CD4-positive, alpha-beta memory T cell (primary cell): ENCODE measurements at regions of chr14 and their contacts with region 1.

Region 1: DNA sequence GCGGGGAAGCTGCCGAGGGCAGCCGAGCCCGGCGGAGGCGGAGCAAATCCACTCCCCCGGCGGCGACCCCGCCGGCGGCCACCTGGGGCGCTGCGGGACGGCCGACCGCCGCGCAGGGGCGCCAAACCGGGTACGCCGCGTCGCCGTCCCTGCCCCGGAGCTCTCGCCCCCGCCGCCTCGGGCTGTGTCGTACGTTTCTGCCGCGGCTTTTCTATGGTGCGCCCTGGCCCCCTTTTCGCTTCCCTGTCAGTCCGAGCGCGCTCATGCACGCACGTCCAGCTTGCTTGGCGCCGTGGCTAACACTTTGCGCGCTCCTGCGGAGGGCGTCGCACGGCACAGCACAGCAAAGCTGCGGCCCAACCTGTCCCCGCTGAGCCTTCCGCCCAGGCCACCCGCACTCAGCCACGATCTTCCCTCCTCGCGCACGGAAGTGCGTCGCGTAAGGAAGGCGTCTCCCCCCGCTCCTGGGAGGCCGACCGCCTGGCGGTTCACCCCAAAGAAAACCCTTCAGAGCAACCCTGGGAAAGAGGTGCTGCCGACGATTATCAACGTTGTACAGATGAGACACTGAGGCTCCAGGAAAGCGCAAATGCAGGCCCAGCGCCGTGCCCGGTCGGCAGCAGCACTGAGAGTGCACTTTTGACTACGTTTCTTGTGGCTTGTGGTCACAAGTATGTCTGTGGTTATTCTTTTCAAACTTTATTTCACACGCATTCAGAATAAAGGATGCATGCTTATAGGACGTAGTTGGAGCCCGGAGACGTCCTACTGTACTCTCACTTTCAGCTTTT is at the start of gene HECTD1:
- DNase-seq: peak; percentile 91 to 94 (median 92)
- H3K4me3 ChIP-seq: peak within 1 kb of the TSS; percentile 76 to 79
- H3K4me3 Mint-ChIP-seq: peak within 1 kb of the TSS; percentile 91 to 98 (median 95)
- H3K27ac ChIP-seq: peak within 1 kb of the TSS; percentile 97
- H3K27ac Mint-ChIP-seq: peak within 1 kb of the TSS; percentile 99 to 100 (median 99)
- H3K4me1 ChIP-seq: peaks cover 46% of the 10 kb centered on the region
- H3K4me1 Mint-ChIP-seq: peaks cover 43 to 77% (median 55%) of the 10 kb centered on the region in 4 donors
- H3K27me3 ChIP-seq: no peaks in the 10 kb centered on the region
- H3K27me3 Mint-ChIP-seq: no peaks in the 10 kb centered on the region
- total RNA-seq, gene HECTD1: 157 to 170 TPM

Region 2: DNA sequence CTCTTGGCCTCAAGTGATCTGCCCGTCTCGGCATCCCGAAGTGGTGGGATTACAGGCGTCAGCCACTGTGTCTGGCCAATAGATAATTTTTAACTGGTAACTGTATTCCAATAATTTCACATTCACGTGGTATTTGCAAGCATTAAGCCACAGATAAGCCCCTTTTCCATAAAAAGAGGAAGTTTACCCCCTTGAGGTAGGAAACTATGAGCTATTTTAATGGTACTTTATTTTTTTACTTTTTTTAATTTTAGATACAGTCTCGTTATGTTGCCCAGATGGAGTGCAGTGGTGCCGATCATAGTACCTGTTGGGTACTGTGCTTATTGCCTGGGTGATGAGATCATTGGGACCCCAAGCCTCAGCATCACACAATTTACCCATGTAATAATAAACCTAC is 225.4 kb before region 1 on chr14:
- CTCF ChIA-PET with region 1: interaction called, 3 read pairs
- POLR2A ChIA-PET with region 1: interaction called, 4 read pairs
- intact Hi-C with region 1: loop called (anchors 5 kb)
- DNase-seq: no peak
- H3K4me3 ChIP-seq: no peak overlapping the region
- H3K4me3 Mint-ChIP-seq: no peak overlapping the region
- H3K27ac ChIP-seq: no peak overlapping the region
- H3K27ac Mint-ChIP-seq: peak overlapping the region in 1 of 7 donors; percentile 11
- H3K4me1 ChIP-seq: no peaks in the 10 kb centered on the region
- H3K4me1 Mint-ChIP-seq: peaks cover 15 to 28% (median 19%) of the 10 kb centered on the region in 4 donors
- H3K27me3 ChIP-seq: no peaks in the 10 kb centered on the region
- H3K27me3 Mint-ChIP-seq: no peaks in the 10 kb centered on the region

Region 3: GRCh38 chr14:31127690-31128089 is 80.3 kb before region 1 on chr14:
- CTCF ChIA-PET with region 1: interaction called, 28 read pairs
- POLR2A ChIA-PET with region 1: interaction called, 152 read pairs
- intact Hi-C with region 1: loop called (anchors 1 kb)
- DNase-seq: peak; percentile 80 to 91 (median 85)
- H3K4me3 ChIP-seq: no peak overlapping the region
- H3K4me3 Mint-ChIP-seq: peak overlapping the region in 7 of 8 donors; percentile 5 to 80 (median 54)
- H3K27ac ChIP-seq: peak overlapping the region; percentile 63
- H3K27ac Mint-ChIP-seq: peak overlapping the region; percentile 65 to 98 (median 87)
- H3K4me1 ChIP-seq: peaks cover 47% of the 10 kb centered on the region
- H3K4me1 Mint-ChIP-seq: peaks cover 39 to 58% (median 49%) of the 10 kb centered on the region in 4 donors
- H3K27me3 ChIP-seq: no peaks in the 10 kb centered on the region
- H3K27me3 Mint-ChIP-seq: no peaks in the 10 kb centered on the region

Region 4: GRCh38 chr14:31270196-31270772 is 62.3 kb after region 1 on chr14:
- CTCF ChIA-PET with region 1: interaction called, 7 read pairs
- POLR2A ChIA-PET with region 1: interaction called, 5 read pairs
- intact Hi-C with region 1: loop called (anchors 5 kb)
- DNase-seq: no peak
- H3K4me3 ChIP-seq: no peak overlapping the region
- H3K4me3 Mint-ChIP-seq: no peak overlapping the region
- H3K27ac ChIP-seq: no peak overlapping the region
- H3K27ac Mint-ChIP-seq: no peak overlapping the region
- H3K4me1 ChIP-seq: no peaks in the 10 kb centered on the region
- H3K4me1 Mint-ChIP-seq: peaks cover 5 to 11% (median 8%) of the 10 kb centered on the region in 4 donors
- H3K27me3 ChIP-seq: no peaks in the 10 kb centered on the region
- H3K27me3 Mint-ChIP-seq: no peaks in the 10 kb centered on the region

Region 5: GRCh38 chr14:31360919-31361662 is 153.1 kb after region 1 on chr14:
- CTCF ChIA-PET with region 1: interaction called, 4 read pairs
- POLR2A ChIA-PET with region 1: interaction called, 5 read pairs
- intact Hi-C with region 1: loop called (anchors 1 kb)
- DNase-seq: no peak
- H3K4me3 ChIP-seq: no peak overlapping the region
- H3K4me3 Mint-ChIP-seq: no peak overlapping the region
- H3K27ac ChIP-seq: no peak overlapping the region
- H3K27ac Mint-ChIP-seq: peak overlapping the region in 1 of 7 donors; percentile 58
- H3K4me1 ChIP-seq: peaks cover 2% of the 10 kb centered on the region
- H3K4me1 Mint-ChIP-seq: no peaks in the 10 kb centered on the region
- H3K27me3 ChIP-seq: no peaks in the 10 kb centered on the region
- H3K27me3 Mint-ChIP-seq: no peaks in the 10 kb centered on the region

Region 6: DNA sequence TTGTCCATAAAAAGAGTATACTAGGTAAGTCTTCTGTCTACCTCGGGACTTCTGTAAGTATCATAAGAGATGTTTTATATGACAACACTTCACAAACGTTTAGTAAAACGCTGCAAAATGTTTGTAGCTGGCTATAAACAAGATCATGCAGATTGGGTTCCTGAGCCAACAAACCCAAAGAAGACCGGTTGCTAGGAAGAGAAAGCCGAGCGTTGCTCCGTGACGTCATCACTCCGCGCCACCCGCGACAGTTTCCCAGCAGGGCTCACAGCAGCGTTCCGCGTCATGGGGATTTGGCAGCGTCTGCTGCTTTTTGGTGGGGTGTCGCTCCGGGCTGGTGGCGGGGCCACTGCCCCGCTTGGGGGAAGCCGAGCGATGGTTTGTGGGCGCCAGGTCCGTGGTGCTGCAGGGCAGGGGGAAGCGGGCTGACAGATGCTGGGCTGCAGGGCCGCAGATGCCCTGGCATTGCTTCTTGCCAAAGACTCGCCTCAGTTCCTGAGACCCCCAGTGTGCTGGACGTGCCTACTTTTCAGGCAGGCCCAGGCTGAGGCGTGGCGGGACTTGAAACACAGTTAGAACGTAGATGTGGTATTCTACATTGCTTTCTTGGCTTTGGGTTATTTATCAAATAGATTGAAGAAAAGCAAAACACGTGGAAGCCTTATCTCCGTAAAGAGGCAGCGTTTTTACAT is 353.4 kb after region 1 on chr14 and contains the start of gene NUBPL:
- CTCF ChIA-PET with region 1: no interaction called
- POLR2A ChIA-PET with region 1: interaction called, 3 read pairs
- intact Hi-C with region 1: loop called (anchors 5 kb)
- DNase-seq: peak; percentile 96 to 98 (median 97)
- H3K4me3 ChIP-seq: peak within 1 kb of the TSS; percentile 94
- H3K4me3 Mint-ChIP-seq: peak within 1 kb of the TSS; percentile 94 to 98 (median 96)
- H3K27ac ChIP-seq: peak within 1 kb of the TSS; percentile 62
- H3K27ac Mint-ChIP-seq: peak within 1 kb of the TSS; percentile 94 to 99 (median 98)
- H3K4me1 ChIP-seq: peaks cover 17% of the 10 kb centered on the region
- H3K4me1 Mint-ChIP-seq: peaks cover 16 to 27% (median 21%) of the 10 kb centered on the region in 4 donors
- H3K27me3 ChIP-seq: no peaks in the 10 kb centered on the region
- H3K27me3 Mint-ChIP-seq: peaks cover 9 to 21% of the 10 kb centered on the region in 2 donors
- total RNA-seq, gene NUBPL: 7.4 to 7.5 TPM